AG04450 (cell line): ENCODE measurements at regions of chr6 and their contacts with region 1.

Region 1: GRCh38 chr6:85404502-85405174 is 45.2 kb upstream of the NT5E start:
- DNase-seq: peak; percentile 79
- H3K4me3 ChIP-seq: no peak overlapping the region
- H3K27ac ChIP-seq: peak overlapping the region; percentile 95
- H3K27me3 ChIP-seq: no peaks in the 10 kb centered on the region
- CTCF ChIP-seq: no peak

Region 2: DNA sequence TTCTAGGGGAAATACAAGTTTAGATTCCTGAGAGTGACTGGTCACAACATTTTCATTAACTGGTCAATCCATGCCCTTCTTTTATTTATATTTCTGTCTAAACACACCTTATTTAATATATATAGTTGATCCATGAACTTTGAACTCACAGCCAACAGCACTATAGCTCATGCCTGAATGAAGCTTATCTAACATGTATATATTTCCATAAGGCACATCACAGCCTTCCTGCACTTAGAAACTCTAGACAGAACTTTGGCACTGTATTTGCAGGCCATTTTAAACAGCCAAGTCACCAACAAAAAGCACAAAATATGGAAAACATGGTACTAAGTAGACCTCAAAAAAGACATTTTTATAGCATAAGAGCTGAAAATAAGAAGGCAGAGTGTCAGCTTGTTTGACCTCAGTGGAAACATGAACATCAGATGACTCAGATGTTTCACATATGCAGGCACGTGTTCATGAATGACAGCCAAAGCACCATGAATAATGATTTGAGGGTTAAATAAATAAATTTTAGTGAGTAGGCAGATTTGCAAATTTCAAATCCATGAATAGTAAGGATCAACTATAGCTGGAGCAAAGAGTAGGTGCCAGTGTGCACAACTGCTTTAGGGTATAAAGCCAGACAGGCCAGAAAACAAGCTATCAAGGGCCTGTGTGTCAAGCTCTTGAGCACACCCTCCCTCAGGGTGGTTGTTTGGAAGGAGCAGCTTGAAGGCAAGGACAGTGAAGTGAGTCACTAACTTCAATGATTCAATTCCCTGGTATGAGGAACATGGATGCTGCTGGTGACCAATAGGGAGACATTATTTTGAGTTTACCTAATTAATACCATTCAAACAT is 43.6 kb before region 1 on chr6:
- CTCF ChIA-PET with region 1: interaction called, 10 read pairs
- POLR2A ChIA-PET with region 1: interaction called, 15 read pairs
- DNase-seq: peak; percentile 90
- H3K4me3 ChIP-seq: no peak overlapping the region
- H3K27ac ChIP-seq: peak overlapping the region; percentile 62
- H3K27me3 ChIP-seq: no peaks in the 10 kb centered on the region
- CTCF ChIP-seq: no peak

Region 3: GRCh38 chr6:85470034-85470431 is 65.4 kb after region 1 on chr6:
- CTCF ChIA-PET with region 1: no interaction called
- POLR2A ChIA-PET with region 1: no interaction called
- DNase-seq: no peak
- H3K4me3 ChIP-seq: no peak overlapping the region
- H3K27ac ChIP-seq: no peak overlapping the region
- H3K27me3 ChIP-seq: no peaks in the 10 kb centered on the region
- CTCF ChIP-seq: no peak